Mammary epithelial cell (primary cell): ENCODE measurements at regions of chr5 and their contacts with region 1.

Region 1: DNA sequence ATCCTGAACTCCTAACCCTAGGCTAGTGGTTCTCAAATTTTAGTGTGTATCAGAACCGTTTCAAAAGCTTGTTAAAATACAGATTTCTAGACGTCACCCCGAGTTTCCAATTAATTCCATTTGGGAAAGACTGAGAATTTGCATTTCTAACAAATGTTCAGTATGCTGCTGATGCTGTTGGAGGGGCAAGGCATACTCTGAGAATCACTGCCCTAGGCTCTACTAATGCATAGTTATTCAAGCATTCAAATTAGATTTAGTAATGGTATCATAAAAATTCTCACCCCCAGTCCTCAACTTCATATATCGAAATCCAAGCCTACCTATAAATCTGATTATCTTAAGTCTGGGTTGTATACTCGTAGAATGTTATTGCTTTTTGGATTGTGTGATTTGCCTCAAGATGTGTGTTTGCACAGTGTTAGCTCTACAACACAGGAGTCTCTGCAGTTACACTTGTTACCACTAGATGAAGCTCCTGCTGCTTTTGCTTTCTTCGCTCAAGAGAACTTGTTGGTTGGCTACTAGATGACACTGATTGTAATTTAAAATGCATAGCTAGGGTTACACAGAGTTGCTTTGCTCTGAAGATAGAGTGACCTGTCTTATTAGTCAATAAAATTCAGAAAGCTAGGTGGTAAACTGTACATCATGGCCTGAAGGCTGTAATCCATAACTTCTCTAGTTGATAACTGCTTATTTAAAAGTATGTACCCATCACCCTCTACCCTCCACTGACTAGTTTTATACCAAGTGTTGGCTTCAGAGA is 7.5 kb upstream of the ERAP2 start:
- DNase-seq: peak; percentile 57
- H3K4me3 ChIP-seq: no peak overlapping the region
- H3K27ac ChIP-seq: no peak overlapping the region
- H3K4me1 ChIP-seq: peaks cover 13% of the 10 kb centered on the region
- H3K27me3 ChIP-seq: no peaks in the 10 kb centered on the region
- CTCF ChIP-seq: peak; percentile 99

Region 2: GRCh38 chr5:96572864-96573512 is 295.8 kb before region 1 on chr5:
- CTCF ChIA-PET with region 1: no interaction called
- dilution Hi-C with region 1: no loop called
- in situ Hi-C with region 1: no loop called
- intact Hi-C with region 1: no loop called
- DNase-seq: peak; percentile 97
- H3K4me3 ChIP-seq: no peak overlapping the region
- H3K27ac ChIP-seq: no peak overlapping the region
- H3K4me1 ChIP-seq: peaks cover 13% of the 10 kb centered on the region
- H3K27me3 ChIP-seq: no peaks in the 10 kb centered on the region
- CTCF ChIP-seq: no peak

Region 3: DNA sequence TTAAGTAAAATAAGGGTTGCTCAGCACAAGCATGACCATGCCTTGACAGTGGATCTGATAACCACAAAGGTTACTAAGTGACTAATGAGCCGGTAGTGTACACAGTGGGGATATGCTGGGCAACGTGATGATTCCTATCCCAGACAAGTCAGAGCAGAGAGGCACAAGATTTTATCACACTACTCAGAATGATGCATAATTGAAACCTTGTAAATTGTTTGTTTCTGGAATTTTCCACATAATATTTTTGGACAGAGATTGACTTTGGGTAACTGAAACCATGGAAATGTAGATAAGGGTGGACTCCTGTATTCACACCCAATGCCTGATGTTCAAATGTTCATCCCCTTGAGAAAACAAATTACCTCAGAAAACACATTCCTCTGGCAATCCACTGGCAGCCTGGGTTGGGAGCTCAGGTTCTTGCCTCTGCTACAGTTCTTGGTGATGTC is 44.9 kb before region 1 on chr5:
- CTCF ChIA-PET with region 1: no interaction called
- dilution Hi-C with region 1: no loop called
- in situ Hi-C with region 1: no loop called
- intact Hi-C with region 1: no loop called
- DNase-seq: peak; percentile 99
- H3K4me3 ChIP-seq: no peak overlapping the region
- H3K27ac ChIP-seq: peak overlapping the region; percentile 89
- H3K4me1 ChIP-seq: peaks cover 32% of the 10 kb centered on the region
- H3K27me3 ChIP-seq: no peaks in the 10 kb centered on the region
- CTCF ChIP-seq: no peak

Region 4: GRCh38 chr5:96997265-96997859 is 128.6 kb after region 1 on chr5:
- CTCF ChIA-PET with region 1: interaction called, 3 read pairs
- dilution Hi-C with region 1: no loop called
- in situ Hi-C with region 1: no loop called
- intact Hi-C with region 1: loop called (anchors 1 kb)
- DNase-seq: peak; percentile 25
- H3K4me3 ChIP-seq: no peak overlapping the region
- H3K27ac ChIP-seq: no peak overlapping the region
- H3K4me1 ChIP-seq: no peaks in the 10 kb centered on the region
- H3K27me3 ChIP-seq: no peaks in the 10 kb centered on the region
- CTCF ChIP-seq: peak; percentile 49 to 51

Region 5: GRCh38 chr5:97044052-97044451 is 175.3 kb after region 1 on chr5:
- CTCF ChIA-PET with region 1: interaction called, 4 read pairs
- dilution Hi-C with region 1: no loop called
- in situ Hi-C with region 1: no loop called
- intact Hi-C with region 1: loop called (anchors 1 kb)
- DNase-seq: peak; percentile 35
- H3K4me3 ChIP-seq: no peak overlapping the region
- H3K27ac ChIP-seq: no peak overlapping the region
- H3K4me1 ChIP-seq: no peaks in the 10 kb centered on the region
- H3K27me3 ChIP-seq: no peaks in the 10 kb centered on the region
- CTCF ChIP-seq: peak; percentile 37 to 42